Activated T-helper 2 cell treated with anti-CD3 and anti-CD28 coated beads, Interferon-gamma antibody, Interleukin-2, Interleukin-4, amounts not matched to agents 10 μg/mL and 5 μg/mL and 100 μg/mL, durations not matched to agents 14 hours and 24 hours and 36 hours (primary cell): ENCODE measurements at regions of chr17 and their contacts with region 1.

Region 1: GRCh38 chr17:43576563-43577229 is 30.6 kb upstream of the ETV4 start:
- DNase-seq: peak; percentile 51
- H3K4me3 Mint-ChIP-seq: no peak overlapping the region
- H3K27ac Mint-ChIP-seq: no peak overlapping the region
- H3K4me1 Mint-ChIP-seq: peaks cover 25% of the 10 kb centered on the region
- H3K27me3 Mint-ChIP-seq: peaks cover 6% of the 10 kb centered on the region

Region 2: DNA sequence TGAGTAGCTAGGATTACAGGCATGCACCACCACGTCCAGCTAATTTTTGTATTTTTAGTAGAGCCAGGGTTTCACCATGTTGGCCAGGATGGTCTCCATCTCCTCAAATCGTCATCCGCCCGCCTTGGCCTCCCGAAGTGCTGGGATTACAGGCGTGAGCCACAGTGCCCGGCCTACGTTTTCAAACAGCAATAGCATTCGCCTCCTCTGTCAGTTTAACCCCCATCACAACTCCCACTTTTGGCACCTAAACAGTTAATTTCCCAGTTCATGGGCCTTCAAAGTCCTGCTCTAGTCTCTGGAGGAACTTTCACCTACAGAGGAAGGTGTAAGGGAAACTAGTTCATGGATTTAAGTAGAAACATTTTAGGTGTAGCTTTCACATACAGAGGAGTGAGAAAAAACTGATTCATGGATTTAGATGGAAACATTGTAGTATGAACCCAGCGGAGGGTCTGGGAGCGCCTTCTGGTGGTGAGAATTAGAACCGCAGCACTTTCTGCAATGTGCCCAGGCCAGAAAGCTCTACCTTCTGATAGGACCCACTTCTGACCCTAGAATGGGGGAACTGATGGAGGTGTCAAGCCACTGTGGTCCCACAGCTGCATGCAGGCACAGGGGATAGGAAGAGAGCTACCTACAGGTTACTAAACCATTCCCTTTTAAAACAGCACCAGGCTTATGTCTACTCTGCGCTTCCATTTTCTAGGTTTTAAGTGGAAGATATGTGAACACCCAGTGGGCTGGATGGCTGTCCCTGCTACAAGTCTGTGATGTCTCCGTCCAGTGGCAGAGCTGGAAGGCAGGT is 97.0 kb after region 1 on chr17:
- intact Hi-C with region 1: loop called (anchors 1 kb)
- DNase-seq: peak; percentile 62
- H3K4me3 Mint-ChIP-seq: no peak overlapping the region
- H3K27ac Mint-ChIP-seq: no peak overlapping the region
- H3K4me1 Mint-ChIP-seq: peaks cover 35% of the 10 kb centered on the region
- H3K27me3 Mint-ChIP-seq: peaks cover 9% of the 10 kb centered on the region

Region 3: GRCh38 chr17:43760254-43760852 is 183.7 kb after region 1 on chr17:
- intact Hi-C with region 1: loop called (anchors 10 kb)
- DNase-seq: peak; percentile 78
- H3K4me3 Mint-ChIP-seq: no peak overlapping the region
- H3K27ac Mint-ChIP-seq: no peak overlapping the region
- H3K4me1 Mint-ChIP-seq: no peaks in the 10 kb centered on the region
- H3K27me3 Mint-ChIP-seq: peaks cover 18% of the 10 kb centered on the region